Left cardiac atrium (tissue), 4 donors: ENCODE measurements at regions of chr21 and their contacts with region 1.

Region 1: DNA sequence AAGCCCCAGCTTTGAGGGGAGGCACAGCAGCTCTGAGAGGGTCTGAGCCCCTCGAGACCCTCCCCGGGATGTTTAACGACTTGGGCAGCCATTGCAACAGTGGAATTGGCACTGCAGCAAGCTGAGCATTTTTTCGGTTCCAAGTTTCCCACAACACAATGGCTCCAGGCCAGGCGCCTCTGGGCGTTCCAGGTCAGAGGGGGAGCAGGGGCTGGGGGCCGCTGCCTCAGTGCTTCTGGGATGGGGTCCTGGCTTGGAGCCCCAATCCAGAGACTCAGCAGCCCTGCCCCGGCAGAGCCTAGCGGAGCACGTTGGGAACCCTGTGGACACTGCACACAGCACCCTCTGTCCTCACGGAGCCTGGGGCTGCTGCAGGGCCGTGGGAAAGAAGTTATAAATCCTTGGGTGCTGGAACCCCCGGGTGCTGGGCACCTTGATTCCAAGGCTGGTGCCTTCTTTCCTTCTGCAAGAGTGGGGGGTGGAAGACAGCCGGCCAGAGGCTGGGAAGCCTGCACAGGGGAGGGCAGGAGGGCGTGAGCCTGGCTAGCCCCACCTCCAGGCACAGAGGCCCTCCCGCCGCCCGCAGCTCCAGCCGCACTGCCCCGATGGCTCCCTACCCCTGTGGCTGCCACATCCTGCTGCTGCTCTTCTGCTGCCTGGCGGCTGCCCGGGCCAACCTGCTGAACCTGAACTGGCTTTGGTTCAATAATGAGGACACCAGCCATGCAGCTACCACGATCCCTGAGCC is 50.1 kb downstream of the COL18A1 start:
- DNase-seq: peak; percentile 61
- ATAC-seq: peak; percentile 82 to 87

Region 2: DNA sequence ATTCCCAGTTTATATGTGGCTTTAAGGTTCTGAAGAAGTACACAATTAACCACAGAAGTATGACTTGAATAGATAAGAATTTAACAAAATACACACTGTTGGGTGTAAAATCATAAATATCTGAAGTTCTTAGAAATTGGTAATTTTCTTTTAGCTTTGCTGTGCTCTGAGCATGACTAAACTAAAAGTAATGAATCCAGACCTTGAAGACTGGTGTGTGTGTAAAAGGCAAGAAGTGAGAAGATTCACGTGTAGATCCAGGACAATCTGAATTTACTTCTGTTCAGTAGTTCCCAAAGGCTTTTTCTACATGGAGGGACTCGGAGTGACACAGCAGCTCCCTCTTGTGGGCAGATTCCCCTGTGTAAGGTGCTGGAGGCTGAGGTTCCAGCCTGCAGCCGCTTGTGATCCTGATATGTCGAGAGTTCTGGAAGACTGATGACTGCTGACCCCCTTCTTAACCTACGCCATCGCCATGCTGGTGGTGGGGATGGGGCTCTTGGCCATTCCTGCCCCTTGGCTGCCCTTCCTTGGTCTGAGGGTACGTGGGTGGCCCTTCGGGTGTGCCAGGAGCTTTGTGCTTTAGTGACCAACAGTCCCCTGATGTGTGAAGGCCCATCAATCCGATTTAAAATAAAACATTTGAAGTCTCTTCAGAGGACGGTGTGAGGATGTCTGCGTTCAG is 318.0 kb before region 1 on chr21:
- intact Hi-C with region 1: no loop called
- DNase-seq: peak; percentile 91
- ATAC-seq: peak; percentile 63 to 72

Region 3: GRCh38 chr21:45152265-45152746 is 302.8 kb before region 1 on chr21:
- intact Hi-C with region 1: loop called in 1 of 2 experiments (anchors 10 kb)
- DNase-seq: peak; percentile 39
- ATAC-seq: peak; percentile 44 to 54

Region 4: DNA sequence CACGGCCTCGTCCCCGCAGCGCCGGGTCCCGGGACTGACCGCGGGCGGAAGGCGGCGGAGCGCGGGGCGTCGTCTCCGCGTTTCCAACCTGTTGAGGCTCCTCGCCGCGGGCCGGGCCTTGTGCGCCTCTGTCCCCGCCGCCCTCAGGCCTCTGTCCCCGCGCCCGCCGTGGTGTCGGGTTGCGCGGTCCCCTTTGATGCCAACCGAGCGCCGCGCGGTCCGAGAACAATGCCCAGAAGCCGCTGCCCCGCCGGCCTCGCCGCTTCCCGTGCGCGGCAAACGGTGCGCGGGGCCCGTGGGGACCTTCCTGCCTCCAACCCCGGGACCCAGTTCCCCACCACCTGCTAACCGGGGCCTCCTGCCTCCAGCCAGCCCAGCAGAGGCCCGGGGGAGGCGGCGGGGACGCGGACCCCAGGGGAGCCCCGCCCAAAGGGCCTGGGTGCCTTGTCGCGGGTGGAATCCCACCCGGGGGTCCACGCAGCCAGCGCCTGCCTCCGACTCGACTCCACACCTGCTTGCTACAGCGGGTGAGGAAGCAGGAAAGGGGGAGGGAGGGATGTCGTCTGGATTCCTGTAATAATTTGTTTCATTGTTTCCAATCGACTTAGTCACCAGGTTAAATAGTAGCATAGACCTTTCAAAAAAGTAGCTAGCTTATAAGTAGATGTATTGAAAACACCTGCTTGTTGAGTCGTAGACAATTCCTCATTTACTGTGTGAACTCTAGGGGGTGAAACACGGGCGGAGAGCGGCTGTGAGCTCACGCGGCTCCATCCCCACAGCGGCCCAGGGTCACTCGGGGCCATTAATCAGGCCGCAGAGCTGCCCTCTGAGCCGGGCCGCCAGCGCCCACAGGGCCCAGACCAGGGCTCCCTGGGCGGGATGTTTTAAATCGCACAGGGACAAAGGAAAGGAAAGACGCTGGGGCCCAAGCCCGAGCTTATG is 49.0 kb before region 1 on chr21:
- intact Hi-C with region 1: no loop called
- DNase-seq: peak; percentile 45
- ATAC-seq: peak in 1 of 2 donors; percentile 17